Dendritic cell treated with granulocyte-macrophage colony-stimulating factor and Interleukin-4, amounts not matched to agents 40 ng/mL and 50 ng/mL, for 4 days (primary cell): ENCODE measurements at regions of chr14 and their contacts with region 1.

Region 1: DNA sequence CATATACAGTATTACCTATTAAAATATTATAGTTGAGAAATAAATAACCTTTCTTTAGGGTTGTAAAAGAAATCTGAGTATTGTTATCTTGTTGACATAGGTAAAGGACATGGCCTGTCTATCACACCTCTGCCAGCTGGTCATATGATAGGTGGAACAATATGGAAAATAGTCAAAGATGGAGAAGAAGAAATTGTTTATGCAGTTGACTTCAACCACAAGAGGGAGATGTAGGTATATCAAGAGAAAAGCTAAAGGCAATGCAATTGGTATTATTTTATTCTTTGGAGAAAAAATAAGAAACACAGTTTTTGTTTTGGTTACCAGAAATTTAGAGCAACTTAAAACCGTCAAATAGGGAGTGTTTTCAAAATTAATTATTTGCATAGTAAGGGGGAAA is 13.5 kb downstream of the CPSF2 start:
- H3K4me3 Mint-ChIP-seq: no peak overlapping the region
- H3K27ac Mint-ChIP-seq: no peak overlapping the region
- H3K4me1 Mint-ChIP-seq: peaks cover under 1% of the 10 kb centered on the region
- H3K27me3 Mint-ChIP-seq: no peaks in the 10 kb centered on the region

Region 2: DNA sequence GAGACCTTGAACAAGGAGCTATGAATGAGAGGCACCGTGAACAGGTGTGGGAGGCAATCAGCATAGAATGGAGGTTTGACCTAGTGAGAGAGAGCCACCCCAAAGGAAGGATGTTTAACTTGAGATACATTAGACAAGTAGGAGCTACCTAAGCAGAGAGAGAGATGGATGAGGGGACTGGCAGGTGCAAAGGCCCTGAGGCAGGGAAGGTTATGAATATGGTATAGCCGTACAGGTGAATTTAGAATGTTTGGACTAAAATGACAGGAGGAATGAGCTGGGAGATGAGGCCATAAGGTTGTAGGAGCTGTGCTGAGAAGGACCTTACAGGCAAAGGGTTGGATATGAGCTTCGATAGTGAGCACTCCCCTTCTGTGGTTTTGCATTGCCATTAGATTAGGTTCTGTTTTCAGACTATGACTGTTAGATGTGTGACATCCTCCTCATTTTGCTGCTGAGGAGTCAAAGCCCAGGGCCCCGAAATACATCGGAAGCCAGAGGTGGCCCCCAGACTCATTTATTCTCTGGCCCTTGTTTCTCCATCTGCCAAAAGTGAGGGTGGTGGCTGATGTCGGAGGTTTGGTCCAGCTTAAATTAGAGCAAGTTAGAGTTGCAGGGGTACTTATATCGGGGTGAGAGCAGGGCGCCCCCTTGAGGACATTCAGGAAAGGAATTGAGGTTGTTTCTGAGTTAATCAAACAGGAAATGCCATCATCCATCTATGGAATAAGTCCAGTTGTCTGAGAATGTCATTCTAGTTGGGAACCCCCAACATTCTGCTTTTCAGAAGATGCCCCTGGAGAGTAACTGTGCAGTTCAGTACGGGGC is 217.1 kb after region 1 on chr14:
- intact Hi-C with region 1: loop called (anchors 10 kb)
- H3K4me3 Mint-ChIP-seq: no peak overlapping the region
- H3K27ac Mint-ChIP-seq: no peak overlapping the region
- H3K4me1 Mint-ChIP-seq: peaks cover 14% of the 10 kb centered on the region
- H3K27me3 Mint-ChIP-seq: peaks cover 11% of the 10 kb centered on the region

Region 3: GRCh38 chr14:93970549-93970946 is 1835.3 kb after region 1 on chr14:
- intact Hi-C with region 1: no loop called
- H3K4me3 Mint-ChIP-seq: peak overlapping the region; percentile 71
- H3K27ac Mint-ChIP-seq: no peak overlapping the region
- H3K4me1 Mint-ChIP-seq: peaks cover 75% of the 10 kb centered on the region
- H3K27me3 Mint-ChIP-seq: peaks cover 33% of the 10 kb centered on the region